Dorsolateral prefrontal cortex (tissue), 120 donors: ENCODE measurements at regions of chr2 and their contacts with region 1.

Region 1: DNA sequence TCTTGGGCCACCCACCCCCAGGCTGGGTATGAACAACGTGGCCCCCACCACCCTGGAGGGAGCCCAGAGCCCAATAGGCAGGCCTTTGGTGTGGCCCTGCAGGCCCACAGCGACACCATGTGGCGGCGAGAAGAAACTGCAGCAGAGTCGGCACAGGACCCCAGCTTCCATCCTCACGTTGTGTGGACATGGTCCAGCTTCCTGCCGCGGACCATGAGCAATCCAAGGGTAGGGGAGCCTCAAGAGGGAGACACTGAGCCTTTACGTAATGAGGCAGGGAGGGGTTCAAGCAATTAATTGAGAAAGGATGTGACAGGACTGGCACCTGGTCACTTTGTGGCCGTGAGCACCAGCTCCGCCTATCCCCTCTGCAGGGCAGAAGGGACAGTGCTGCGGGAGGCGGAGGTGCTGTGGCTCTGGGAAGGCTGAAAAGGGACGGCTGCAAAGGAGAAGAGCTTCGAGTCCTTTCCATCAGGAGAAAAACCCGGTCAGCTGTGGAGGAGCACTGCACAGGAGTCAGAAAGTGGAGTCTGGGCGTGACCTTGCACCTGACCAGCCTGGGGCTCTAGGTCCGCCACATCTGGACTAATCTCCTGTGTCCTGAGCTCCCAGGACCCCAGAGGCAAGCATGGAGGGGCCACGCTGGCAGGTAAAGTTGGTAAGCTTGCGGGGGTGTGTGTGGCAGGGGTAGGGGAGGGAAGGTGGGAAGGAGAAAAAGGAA is 44.8 kb downstream of the TMEM37 start:
- DNase-seq: peak in 8 of 10 donors; percentile 38 to 75 (median 46)
- H3K4me3 ChIP-seq: peak overlapping the region in 24 of 59 donors; percentile 1 to 39 (median 18)
- H3K27ac ChIP-seq: no peak overlapping the region
- H3K27me3 ChIP-seq: peaks cover 0 to 7% (median 0%) of the 10 kb centered on the region in 45 donors
- CTCF ChIP-seq: peak; percentile 71 to 99 (median 96)

Region 2: DNA sequence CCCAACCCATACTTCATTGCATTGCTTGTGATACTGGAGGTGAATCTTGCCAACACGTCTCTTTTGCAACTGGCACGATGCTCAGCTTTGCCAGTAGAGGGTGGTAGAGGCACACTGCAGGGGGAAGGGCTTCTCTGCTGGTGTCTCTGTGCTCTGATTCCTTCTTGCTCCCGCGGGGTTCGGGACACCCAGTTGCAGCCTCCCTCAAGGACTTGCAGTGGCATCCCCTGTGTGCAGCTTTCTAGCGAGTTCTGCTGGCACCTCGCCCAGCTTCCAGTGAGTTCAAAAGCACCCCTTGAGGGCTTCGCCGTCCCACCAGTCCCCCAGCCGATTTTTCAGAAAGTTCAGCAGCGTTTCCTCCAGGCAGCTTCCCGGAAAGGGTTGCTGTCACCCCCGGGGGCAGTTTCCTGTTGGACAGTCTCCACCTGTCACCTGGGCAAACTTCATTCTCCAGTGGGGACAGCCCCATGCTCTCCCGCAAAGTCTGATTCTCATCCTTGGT is 593.7 kb before region 1 on chr2:
- intact Hi-C with region 1: loop called (anchors 5 kb)
- DNase-seq: peak in 8 of 10 donors; percentile 15 to 74 (median 58)
- H3K4me3 ChIP-seq: peak overlapping the region in 27 of 59 donors; percentile 4 to 48 (median 28)
- H3K27ac ChIP-seq: no peak overlapping the region
- H3K27me3 ChIP-seq: peaks cover 0 to 42% (median 25%) of the 10 kb centered on the region in 45 donors
- CTCF ChIP-seq: peak; percentile 40 to 90 (median 81)

Region 3: GRCh38 chr2:119011162-119011909 is 465.1 kb before region 1 on chr2:
- intact Hi-C with region 1: loop called in 1 of 2 experiments (anchors 10 kb)
- DNase-seq: peak in 6 of 10 donors; percentile 26 to 75 (median 54)
- H3K4me3 ChIP-seq: peak overlapping the region in 28 of 59 donors; percentile 0 to 50 (median 28)
- H3K27ac ChIP-seq: no peak overlapping the region
- H3K27me3 ChIP-seq: peaks cover 0 to 39% (median 7%) of the 10 kb centered on the region in 45 donors
- CTCF ChIP-seq: peak in 54 of 56 donors; percentile 28 to 79 (median 64)

Region 4: DNA sequence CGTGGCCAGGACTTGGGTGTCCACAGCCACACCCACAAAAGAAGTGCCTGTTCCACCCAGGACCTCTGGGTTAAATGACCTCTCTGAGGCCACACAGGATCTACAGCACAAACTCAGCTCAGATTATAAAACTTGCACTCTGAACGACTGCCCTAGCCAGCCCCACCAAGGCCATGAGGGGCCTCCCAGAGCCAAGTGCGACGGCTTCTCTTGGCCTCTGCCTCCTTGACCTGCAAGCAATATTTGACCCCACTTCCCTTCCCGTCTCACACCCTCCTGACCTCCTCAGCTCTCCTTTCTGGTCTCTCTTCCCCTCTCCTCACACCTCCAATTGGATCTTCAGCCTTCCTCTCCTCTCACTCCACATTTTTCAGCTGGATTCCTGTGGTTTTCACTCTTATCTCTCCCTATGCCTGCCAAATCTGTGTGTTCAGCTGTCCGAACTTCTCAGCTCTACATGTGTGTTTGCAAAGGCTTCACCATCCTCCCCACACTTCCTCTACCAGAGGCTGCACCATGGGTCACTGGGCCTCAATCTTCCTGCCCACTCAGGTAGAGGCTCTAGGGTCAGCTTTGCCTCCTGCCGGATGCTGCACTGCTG is 278.1 kb before region 1 on chr2:
- intact Hi-C with region 1: no loop called
- DNase-seq: no peak
- H3K4me3 ChIP-seq: no peak overlapping the region
- H3K27ac ChIP-seq: no peak overlapping the region
- H3K27me3 ChIP-seq: peaks cover 0 to 10% (median 0%) of the 10 kb centered on the region in 45 donors
- CTCF ChIP-seq: no peak

Region 5: GRCh38 chr2:119311356-119311755 is 165.1 kb before region 1 on chr2:
- intact Hi-C with region 1: loop called in 1 of 2 experiments (anchors 10 kb)
- DNase-seq: no peak
- H3K4me3 ChIP-seq: no peak overlapping the region
- H3K27ac ChIP-seq: no peak overlapping the region
- H3K27me3 ChIP-seq: no peaks in the 10 kb centered on the region
- CTCF ChIP-seq: no peak

Region 6: DNA sequence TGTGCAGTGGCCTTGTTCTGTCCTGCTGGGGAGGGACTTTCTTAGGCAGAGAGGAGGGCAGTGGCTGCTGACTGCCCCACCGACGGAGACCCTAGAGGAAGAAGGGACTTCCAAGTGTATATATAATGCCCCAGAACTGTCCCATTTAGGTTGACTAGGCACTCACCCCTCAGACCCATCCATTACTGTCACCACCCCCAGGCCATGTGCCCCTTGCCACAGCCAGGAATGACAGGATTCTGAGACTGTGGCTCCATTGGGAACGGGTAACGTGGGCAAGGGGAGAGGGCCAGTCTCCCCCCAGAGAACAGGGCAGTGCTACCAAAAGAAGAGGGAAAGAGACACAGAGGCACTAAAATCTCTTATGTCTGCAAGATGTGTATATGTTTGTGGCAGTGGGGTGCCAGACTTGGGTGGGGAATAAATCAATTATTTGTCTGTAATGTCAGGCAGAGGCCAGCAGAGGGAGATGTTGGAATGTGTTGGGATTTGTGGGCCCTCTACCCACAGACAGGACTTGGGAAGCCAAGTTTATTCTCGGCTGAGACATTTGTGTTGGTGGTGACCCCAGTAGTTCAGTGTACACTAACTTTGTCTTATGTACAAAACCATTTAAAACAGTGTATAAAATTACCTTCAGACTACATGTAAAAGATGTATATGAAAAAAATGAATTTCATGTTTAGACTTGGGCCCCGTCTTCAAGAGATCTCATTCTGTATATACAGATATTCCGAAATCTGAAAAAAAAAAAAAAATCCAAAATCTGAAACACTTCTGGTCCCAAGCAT is 68.8 kb before region 1 on chr2:
- intact Hi-C with region 1: loop called (anchors 2 to 5 kb)
- DNase-seq: peak in 2 of 10 donors; percentile 12 to 46
- H3K4me3 ChIP-seq: no peak overlapping the region
- H3K27ac ChIP-seq: no peak overlapping the region
- H3K27me3 ChIP-seq: peaks cover 0 to 4% (median 0%) of the 10 kb centered on the region in 45 donors
- CTCF ChIP-seq: peak; percentile 70 to 94 (median 84)

Region 7: GRCh38 chr2:119608553-119608952 is 132.1 kb after region 1 on chr2:
- intact Hi-C with region 1: no loop called
- DNase-seq: no peak
- H3K4me3 ChIP-seq: no peak overlapping the region
- H3K27ac ChIP-seq: no peak overlapping the region
- H3K27me3 ChIP-seq: no peaks in the 10 kb centered on the region
- CTCF ChIP-seq: no peak

Region 8: DNA sequence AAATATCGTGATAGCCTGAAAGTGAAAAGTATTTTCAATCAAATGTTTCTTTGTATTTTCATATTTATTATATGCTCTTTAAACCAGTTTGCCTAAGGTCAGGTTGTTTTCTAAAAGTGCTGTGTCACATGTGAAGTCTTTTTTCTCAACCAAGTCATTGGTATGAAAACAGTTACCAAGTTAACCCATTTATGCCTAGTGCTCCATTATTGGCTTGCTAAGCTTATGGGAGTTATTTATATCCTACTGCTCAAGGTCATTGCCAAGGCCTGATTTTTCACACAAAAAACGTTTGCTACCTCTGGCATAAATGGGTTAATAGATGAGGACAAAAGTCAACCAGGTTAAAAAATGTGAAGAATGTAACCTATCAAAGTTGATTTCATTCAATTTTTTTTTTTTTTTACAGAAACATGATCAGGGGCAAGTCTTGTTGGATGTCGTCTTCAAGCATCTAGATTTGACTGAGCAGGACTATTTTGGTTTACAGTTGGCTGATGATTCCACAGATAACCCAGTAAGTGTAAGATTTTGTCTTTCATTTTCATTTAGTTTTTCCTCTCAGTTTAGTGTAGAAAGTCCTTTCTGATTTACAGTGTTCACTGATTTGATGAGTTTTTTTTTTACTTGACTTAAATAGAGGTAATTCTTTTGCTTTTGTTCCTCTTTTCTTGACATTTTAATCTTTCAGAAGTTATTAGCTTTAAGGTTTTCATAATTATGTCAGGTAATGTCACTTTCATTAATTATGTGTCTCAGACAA is 385.8 kb after region 1 on chr2:
- intact Hi-C with region 1: no loop called
- DNase-seq: no peak
- H3K4me3 ChIP-seq: no peak overlapping the region
- H3K27ac ChIP-seq: no peak overlapping the region
- H3K27me3 ChIP-seq: no peaks in the 10 kb centered on the region
- CTCF ChIP-seq: no peak